H1 (cell line): ENCODE measurements at regions of chr11 and their contacts with region 1.

Region 1: DNA sequence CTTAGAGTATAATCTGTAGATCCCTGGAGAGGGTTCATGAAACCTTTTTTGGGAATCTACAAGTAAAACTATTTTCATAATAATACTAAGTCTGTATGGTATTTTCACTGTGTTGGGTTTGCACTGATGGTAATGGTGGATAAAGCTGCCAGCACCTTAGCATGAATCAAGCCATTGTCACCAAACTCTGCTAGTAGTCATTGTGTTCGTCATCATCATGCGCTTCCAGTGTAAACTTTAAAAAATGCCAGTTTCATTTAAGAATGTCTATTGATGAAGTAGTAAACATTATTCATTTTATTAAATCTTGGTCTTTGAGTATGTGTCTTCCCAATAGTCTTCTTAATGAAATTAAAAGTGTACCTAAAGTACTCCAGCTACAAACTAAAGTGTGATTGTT is 15.0 kb downstream of the ALKBH3 start:
- DNase-seq: no peak
- H3K4me3 ChIP-seq: no peak overlapping the region
- H3K27ac ChIP-seq: no peak overlapping the region
- H3K4me1 ChIP-seq: no peaks in the 10 kb centered on the region
- H3K27me3 ChIP-seq: no peaks in the 10 kb centered on the region
- CTCF ChIP-seq: no peak
- EP300 ChIP-seq: no peak
- POLR2A ChIP-seq: no peak
- RAD21 ChIP-seq: no peak

Region 2: DNA sequence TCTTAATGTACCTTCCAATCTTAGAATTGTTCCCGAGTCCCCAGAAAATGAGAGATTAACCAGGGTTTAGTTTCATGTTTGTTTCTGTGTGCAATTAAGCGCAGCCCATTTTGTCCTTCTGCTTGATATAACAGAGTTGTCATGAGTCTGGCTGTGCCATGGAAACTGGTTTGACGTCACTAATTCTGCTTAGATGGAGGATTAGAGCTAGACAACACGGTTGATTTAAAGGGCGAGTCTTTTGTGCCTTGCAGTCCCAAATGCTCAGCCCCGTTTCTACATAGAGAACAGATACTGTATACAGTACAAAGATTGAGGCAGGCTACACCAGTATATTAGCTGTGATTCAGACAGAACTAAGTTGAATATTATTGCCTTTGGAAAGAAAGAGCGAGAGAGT is 60.5 kb before region 1 on chr11:
- CTCF ChIA-PET with region 1: no interaction called
- POLR2A ChIA-PET with region 1: no interaction called
- DNase-seq: no peak
- H3K4me3 ChIP-seq: no peak overlapping the region
- H3K27ac ChIP-seq: no peak overlapping the region
- H3K4me1 ChIP-seq: no peaks in the 10 kb centered on the region
- H3K27me3 ChIP-seq: no peaks in the 10 kb centered on the region
- CTCF ChIP-seq: no peak
- EP300 ChIP-seq: no peak
- POLR2A ChIP-seq: no peak
- RAD21 ChIP-seq: no peak

Region 3: DNA sequence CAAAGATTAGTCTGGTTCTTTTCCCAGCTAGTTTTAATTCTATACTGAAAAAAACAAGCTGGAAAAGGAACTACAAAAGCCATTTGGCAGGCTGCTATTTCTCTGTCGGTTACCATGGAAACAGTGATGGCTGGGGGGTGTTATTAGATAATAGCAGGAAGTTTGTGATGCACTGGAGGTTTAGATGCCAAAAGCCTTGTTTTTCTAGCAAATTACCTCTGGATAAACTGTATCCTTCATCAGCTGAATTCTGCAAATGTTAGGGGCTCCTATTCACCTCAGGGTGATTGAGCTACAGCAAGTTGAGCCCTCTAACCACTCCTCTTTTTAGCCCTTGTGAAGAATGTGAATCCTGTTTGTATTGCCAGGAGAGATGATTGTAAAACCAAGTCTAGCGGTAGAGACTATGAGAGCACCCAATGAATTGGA is 10.2 kb after region 1 on chr11:
- CTCF ChIA-PET with region 1: interaction called, 29 read pairs
- POLR2A ChIA-PET with region 1: interaction called, 3 read pairs
- DNase-seq: no peak
- H3K4me3 ChIP-seq: no peak overlapping the region
- H3K27ac ChIP-seq: no peak overlapping the region
- H3K4me1 ChIP-seq: no peaks in the 10 kb centered on the region
- H3K27me3 ChIP-seq: no peaks in the 10 kb centered on the region; a peak in 1 of 7 replicates
- CTCF ChIP-seq: no peak
- EP300 ChIP-seq: no peak
- POLR2A ChIP-seq: no peak
- RAD21 ChIP-seq: no peak

Region 4: GRCh38 chr11:44005063-44005701 is 109.6 kb after region 1 on chr11:
- CTCF ChIA-PET with region 1: interaction called, 24 read pairs
- POLR2A ChIA-PET with region 1: no interaction called
- DNase-seq: peak in 1 of 2 experiments; percentile 52
- H3K4me3 ChIP-seq: no peak overlapping the region
- H3K27ac ChIP-seq: no peak overlapping the region
- H3K4me1 ChIP-seq: peaks cover 0 to 18% (median 7%) of the 10 kb centered on the region in 4 experiments; a peak in 6 of 7 replicates
- H3K27me3 ChIP-seq: peaks cover 0 to 2% (median 0%) of the 10 kb centered on the region in 4 experiments; a peak in 1 of 7 replicates
- CTCF ChIP-seq: no peak
- EP300 ChIP-seq: no peak
- POLR2A ChIP-seq: no peak
- RAD21 ChIP-seq: no peak

Region 5: GRCh38 chr11:44036811-44037657 is 141.4 kb after region 1 on chr11:
- CTCF ChIA-PET with region 1: interaction called, 80 read pairs
- POLR2A ChIA-PET with region 1: no interaction called
- DNase-seq: peak; percentile 61 to 80
- H3K4me3 ChIP-seq: no peak overlapping the region
- H3K27ac ChIP-seq: no peak overlapping the region
- H3K4me1 ChIP-seq: peaks cover 0 to 2% (median 0%) of the 10 kb centered on the region in 4 experiments; a peak in 3 of 7 replicates
- H3K27me3 ChIP-seq: no peaks in the 10 kb centered on the region
- CTCF ChIP-seq: peak; percentile 75 to 96 (median 91)
- EP300 ChIP-seq: no peak
- POLR2A ChIP-seq: no peak
- RAD21 ChIP-seq: peak; percentile 97 to 98